H1 (cell line): ENCODE measurements at regions of chrX and their contacts with region 1.

Region 1: DNA sequence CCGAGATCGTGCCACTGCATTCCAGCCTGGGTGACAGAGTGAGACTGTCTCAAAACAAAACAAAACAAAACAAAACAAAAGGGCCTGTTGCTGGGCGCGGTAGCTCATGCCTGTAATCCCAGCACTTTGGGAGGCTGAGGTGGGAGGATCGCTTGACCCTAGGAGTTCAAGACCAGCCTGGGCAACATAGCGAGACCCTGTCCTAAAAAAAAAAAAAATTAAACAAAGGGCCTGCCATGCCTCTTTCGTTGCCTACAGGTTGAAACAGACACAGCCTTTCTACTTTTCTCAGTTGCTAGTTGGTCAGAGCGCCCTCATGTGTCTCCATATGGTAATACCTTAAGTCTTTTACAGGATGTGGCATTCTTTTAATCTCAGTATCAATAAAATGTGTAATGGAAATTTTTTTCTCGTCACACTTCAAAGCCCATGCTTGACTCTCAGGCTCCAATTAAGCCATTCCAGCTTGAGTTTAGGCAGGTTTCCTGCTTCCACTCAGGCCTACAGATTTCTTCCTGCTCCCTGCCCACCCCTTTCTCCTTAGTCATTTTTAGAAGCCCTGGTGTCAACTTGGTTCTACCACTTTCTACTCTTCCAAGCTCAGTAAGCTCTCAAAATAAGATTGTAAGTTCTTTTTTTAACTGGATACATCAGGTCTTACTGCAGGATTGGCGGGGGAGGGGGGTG is 4.7 kb upstream of the SOWAHD start:
- DNase-seq: no peak
- H3K4me3 ChIP-seq: no peak overlapping the region
- H3K27ac ChIP-seq: no peak overlapping the region
- H3K4me1 ChIP-seq: peaks cover 4 to 16% (median 12%) of the 10 kb centered on the region in 4 experiments; a peak in 5 of 7 replicates
- H3K27me3 ChIP-seq: no peaks in the 10 kb centered on the region
- CTCF ChIP-seq: peak in 2 of 3 experiments; percentile 54 to 55; a peak in 3 of 4 replicates
- EP300 ChIP-seq: no peak
- POLR2A ChIP-seq: no peak
- RAD21 ChIP-seq: peak; percentile 39 to 60

Region 2: DNA sequence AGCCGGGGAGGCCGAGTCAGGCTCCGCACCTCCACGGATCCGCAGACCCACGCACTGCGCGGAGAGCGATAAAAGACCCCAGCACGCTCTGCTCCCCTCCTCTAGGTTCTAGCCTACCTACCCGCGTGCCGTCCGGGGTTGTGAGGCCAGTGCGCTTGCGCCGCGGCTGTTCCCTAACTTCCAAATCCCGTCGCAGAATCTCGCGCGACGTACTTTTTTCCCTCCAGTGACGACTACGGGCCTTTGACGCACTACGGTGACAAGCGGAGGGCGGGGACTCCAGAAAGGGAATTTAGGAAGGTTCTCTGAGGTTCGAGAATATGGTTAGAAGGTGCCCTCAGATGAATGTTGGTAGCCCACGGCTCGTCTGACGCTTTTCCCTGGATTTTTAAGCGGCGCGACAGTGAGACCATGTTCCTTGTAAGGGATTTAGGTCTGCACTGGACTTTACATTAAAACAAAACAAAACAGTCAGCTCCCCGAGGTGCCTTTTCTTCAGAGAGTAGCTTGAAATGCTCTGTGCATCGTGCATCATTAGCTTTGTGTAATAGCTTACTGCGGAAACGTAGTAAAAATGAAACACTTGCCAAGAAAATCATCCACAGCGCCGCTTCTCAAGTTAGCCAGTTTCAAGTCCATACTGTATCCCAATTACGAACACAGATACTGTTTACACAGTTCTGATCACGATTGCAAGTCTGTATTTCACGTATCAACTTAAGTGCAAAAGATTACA is 147.3 kb before region 1 on chrX and contains the start of gene NKRF:
- CTCF ChIA-PET with region 1: interaction called, 11 read pairs
- POLR2A ChIA-PET with region 1: interaction called, 3 read pairs
- DNase-seq: peak; percentile 56 to 89
- H3K4me3 ChIP-seq: peak within 1 kb of the TSS; percentile 59 to 80 (median 68)
- H3K27ac ChIP-seq: no peak within 1 kb of the TSS; the same call in 1 of the 2 replicates
- H3K4me1 ChIP-seq: no peaks in the 10 kb centered on the region; a peak in 1 of 7 replicates
- H3K27me3 ChIP-seq: peaks cover 0 to 15% (median 4%) of the 10 kb centered on the region in 4 experiments; a peak in 4 of 7 replicates
- CTCF ChIP-seq: no peak
- EP300 ChIP-seq: no peak
- POLR2A ChIP-seq: peak; percentile 26 to 68; a peak in 2 of 3 replicates
- RAD21 ChIP-seq: no peak
- total RNA-seq, gene NKRF: 11.4 and 12.3 TPM in 2 replicates

Region 3: DNA sequence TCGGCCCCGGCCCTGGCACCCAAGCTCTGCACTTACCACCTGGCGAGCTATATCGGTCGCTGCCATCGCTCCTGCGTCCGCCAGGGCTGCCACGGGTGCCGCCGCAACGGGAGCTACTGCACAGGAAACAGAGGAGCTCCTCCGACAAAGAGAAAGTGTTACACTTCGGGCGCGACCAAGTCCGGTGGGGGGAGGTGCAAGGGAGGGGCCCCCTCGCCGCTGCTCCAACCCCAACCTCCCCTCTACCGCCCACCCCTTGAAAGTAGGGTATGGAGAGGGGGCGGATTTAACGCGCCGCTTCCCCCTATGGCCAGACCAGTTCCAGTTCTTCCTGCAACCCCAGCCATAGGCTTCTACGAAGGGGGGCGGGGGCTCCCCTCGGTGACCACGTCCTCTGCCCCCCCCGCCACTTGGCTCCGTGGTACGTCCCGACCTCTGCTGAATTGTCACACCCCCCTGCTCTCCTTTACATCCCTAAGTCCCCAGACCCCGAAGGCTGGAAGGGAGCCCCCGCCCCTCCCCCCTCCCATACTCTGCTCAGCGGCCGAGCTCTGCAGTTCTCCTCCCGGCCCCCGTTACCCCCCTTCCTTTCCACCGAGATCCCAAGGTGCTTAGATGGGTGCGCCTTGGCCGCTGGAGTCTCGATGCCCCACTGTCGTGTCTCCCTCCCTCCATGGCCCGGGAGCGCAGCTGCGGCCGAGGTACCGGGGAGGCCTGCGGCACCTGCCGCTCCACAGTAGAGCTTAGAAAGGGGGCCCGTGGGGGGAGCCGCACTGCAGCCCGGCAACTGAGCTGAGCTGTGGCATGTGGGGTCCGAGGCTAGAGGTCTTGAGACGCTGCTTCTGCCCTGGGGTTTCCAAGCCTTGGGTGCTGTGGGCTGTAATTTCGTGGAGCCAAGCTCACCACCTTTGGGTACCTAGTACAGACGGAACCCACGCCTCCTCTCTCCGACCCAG is 60.4 kb before region 1 on chrX and contains the start of gene SEPTIN6:
- CTCF ChIA-PET with region 1: interaction called, 6 read pairs
- POLR2A ChIA-PET with region 1: interaction called, 10 read pairs
- DNase-seq: peak; percentile 53 to 76
- H3K4me3 ChIP-seq: peak within 1 kb of the TSS; percentile 45 to 81 (median 58)
- H3K27ac ChIP-seq: no peak within 1 kb of the TSS
- H3K4me1 ChIP-seq: peaks cover 8 to 23% (median 15%) of the 10 kb centered on the region in 4 experiments
- H3K27me3 ChIP-seq: peaks cover 0 to 10% (median 8%) of the 10 kb centered on the region in 4 experiments; a peak in 3 of 7 replicates
- CTCF ChIP-seq: no peak
- EP300 ChIP-seq: peak in 1 of 2 experiments; percentile 85; a peak in 1 of 3 replicates
- POLR2A ChIP-seq: peak in 1 of 2 experiments; percentile 32; a peak in 1 of 3 replicates
- RAD21 ChIP-seq: no peak
- total RNA-seq, gene SEPTIN6: 27.9 and 31.0 TPM in 2 replicates

Region 4: GRCh38 chrX:119784747-119785446 is 31.2 kb after region 1 on chrX:
- CTCF ChIA-PET with region 1: interaction called, 17 read pairs
- POLR2A ChIA-PET with region 1: interaction called, 48 read pairs
- DNase-seq: peak; percentile 9 to 51
- H3K4me3 ChIP-seq: no peak overlapping the region
- H3K27ac ChIP-seq: no peak overlapping the region
- H3K4me1 ChIP-seq: peaks cover 0 to 3% (median 0%) of the 10 kb centered on the region in 4 experiments; a peak in 1 of 7 replicates
- H3K27me3 ChIP-seq: no peaks in the 10 kb centered on the region
- CTCF ChIP-seq: peak; percentile 32 to 72 (median 71); a peak in 3 of 4 replicates
- EP300 ChIP-seq: no peak
- POLR2A ChIP-seq: peak; percentile 53 to 77
- RAD21 ChIP-seq: peak; percentile 9 to 33; a peak in 3 of 4 replicates

Region 5: GRCh38 chrX:119801253-119802221 is 47.8 kb after region 1 on chrX:
- CTCF ChIA-PET with region 1: no interaction called
- POLR2A ChIA-PET with region 1: no interaction called
- DNase-seq: no peak
- H3K4me3 ChIP-seq: no peak overlapping the region
- H3K27ac ChIP-seq: no peak overlapping the region
- H3K4me1 ChIP-seq: no peaks in the 10 kb centered on the region
- H3K27me3 ChIP-seq: no peaks in the 10 kb centered on the region
- CTCF ChIP-seq: no peak
- EP300 ChIP-seq: no peak
- POLR2A ChIP-seq: no peak
- RAD21 ChIP-seq: no peak

Region 6: GRCh38 chrX:119826399-119826959 is 72.8 kb after region 1 on chrX:
- CTCF ChIA-PET with region 1: no interaction called
- POLR2A ChIA-PET with region 1: no interaction called
- DNase-seq: no peak
- H3K4me3 ChIP-seq: no peak overlapping the region
- H3K27ac ChIP-seq: no peak overlapping the region
- H3K4me1 ChIP-seq: no peaks in the 10 kb centered on the region
- H3K27me3 ChIP-seq: no peaks in the 10 kb centered on the region
- CTCF ChIP-seq: no peak
- EP300 ChIP-seq: no peak
- POLR2A ChIP-seq: no peak
- RAD21 ChIP-seq: no peak

Region 7: GRCh38 chrX:119852382-119853353 is 99.0 kb after region 1 on chrX and contains the start of gene UPF3B:
- CTCF ChIA-PET with region 1: no interaction called
- POLR2A ChIA-PET with region 1: no interaction called
- DNase-seq: peak; percentile 85 to 93
- H3K4me3 ChIP-seq: peak within 1 kb of the TSS; percentile 77 to 99 (median 92)
- H3K27ac ChIP-seq: peak within 1 kb of the TSS; percentile 95
- H3K4me1 ChIP-seq: no peaks in the 10 kb centered on the region
- H3K27me3 ChIP-seq: no peaks in the 10 kb centered on the region
- CTCF ChIP-seq: no peak
- EP300 ChIP-seq: no peak
- POLR2A ChIP-seq: peak; percentile 85 to 86
- RAD21 ChIP-seq: no peak
- total RNA-seq, gene UPF3B: 20.9 and 22.2 TPM in 2 replicates

Region 8: DNA sequence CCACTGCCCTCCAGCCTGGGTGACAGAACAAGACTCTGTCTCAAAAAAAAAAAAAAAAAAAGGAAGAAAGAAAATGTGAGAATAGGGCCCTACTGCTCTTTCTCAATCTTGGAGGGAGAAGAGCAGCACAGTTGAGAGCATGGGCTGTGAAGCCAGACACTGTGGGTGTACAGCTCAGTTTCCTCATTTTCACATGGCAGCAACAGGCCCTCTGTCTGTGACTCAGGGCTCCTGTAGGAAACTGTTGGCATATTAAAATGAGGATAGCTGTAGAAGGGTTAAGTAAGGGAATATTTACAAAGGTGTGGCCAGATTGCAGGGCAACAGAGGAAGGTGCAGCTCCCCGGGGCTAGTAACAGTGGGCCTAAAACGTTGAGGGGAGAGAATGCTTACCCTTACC is 145.4 kb after region 1 on chrX:
- CTCF ChIA-PET with region 1: no interaction called
- POLR2A ChIA-PET with region 1: no interaction called
- DNase-seq: no peak
- H3K4me3 ChIP-seq: no peak overlapping the region
- H3K27ac ChIP-seq: no peak overlapping the region
- H3K4me1 ChIP-seq: peaks cover 0 to 2% (median 0%) of the 10 kb centered on the region in 4 experiments; a peak in 1 of 7 replicates
- H3K27me3 ChIP-seq: no peaks in the 10 kb centered on the region
- CTCF ChIP-seq: no peak
- EP300 ChIP-seq: no peak
- POLR2A ChIP-seq: no peak
- RAD21 ChIP-seq: no peak